ENCODE measurements at regions of chr9 and their contacts with region 1.

Region 1: DNA sequence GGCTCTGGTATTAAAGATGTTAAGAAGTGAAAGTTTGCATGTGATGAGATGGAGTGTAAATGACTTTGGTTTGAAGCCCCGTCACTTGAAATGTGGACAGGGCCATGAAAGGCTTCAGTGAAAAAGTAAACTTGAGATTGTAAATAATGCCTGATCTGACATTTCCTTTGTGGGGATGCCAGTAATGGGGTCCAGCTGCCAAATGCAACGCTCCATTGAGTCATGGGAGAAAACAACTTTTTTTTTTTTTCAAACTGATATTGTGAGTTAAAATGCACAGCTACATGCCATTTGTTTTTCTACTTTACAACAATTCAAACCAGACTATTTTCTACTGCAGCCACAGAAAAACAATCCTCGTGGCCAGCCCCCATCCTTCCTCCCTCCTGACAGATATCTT is 327.0 kb upstream of the TNC start:
- DNase-seq: no peak
- H3K4me3 ChIP-seq: no peak overlapping the region
- H3K27ac ChIP-seq: no peak overlapping the region
- H3K4me1 ChIP-seq: no peaks in the 10 kb centered on the region
- H3K27me3 ChIP-seq: no peaks in the 10 kb centered on the region
- CTCF ChIP-seq: no peak

Region 2: GRCh38 chr9:115335439-115335838 is 109.5 kb before region 1 on chr9:
- CTCF ChIA-PET with region 1: no interaction called
- POLR2A ChIA-PET with region 1: no interaction called
- intact Hi-C with region 1: loop called (anchors 5 kb)
- DNase-seq: no peak
- H3K4me3 ChIP-seq: no peak overlapping the region
- H3K27ac ChIP-seq: no peak overlapping the region
- H3K4me1 ChIP-seq: no peaks in the 10 kb centered on the region
- H3K27me3 ChIP-seq: no peaks in the 10 kb centered on the region
- CTCF ChIP-seq: no peak

Region 3: GRCh38 chr9:115395511-115396021 is 49.4 kb before region 1 on chr9:
- CTCF ChIA-PET with region 1: no interaction called
- POLR2A ChIA-PET with region 1: interaction called, 12 read pairs
- intact Hi-C with region 1: no loop called
- DNase-seq: peak in 1 of 2 experiments; percentile 55
- H3K4me3 ChIP-seq: no peak overlapping the region
- H3K27ac ChIP-seq: no peak overlapping the region
- H3K4me1 ChIP-seq: peaks cover 34% of the 10 kb centered on the region
- H3K27me3 ChIP-seq: no peaks in the 10 kb centered on the region
- CTCF ChIP-seq: no peak

Measured in PC-9 (cell line).